A549 (cell line): ENCODE measurements at regions of chr2 and their contacts with region 1.

Region 1: GRCh38 chr2:101361121-101361870 is 26.0 kb downstream of the CREG2 start:
- DNase-seq: no peak
- ATAC-seq: no peak
- H3K4me3 ChIP-seq: no peak overlapping the region
- H3K27ac ChIP-seq: peak overlapping the region; percentile 24 to 27; a peak in 4 of 6 replicates
- H3K4me1 ChIP-seq: peaks cover 36% of the 10 kb centered on the region
- CTCF ChIP-seq: no peak
- EP300 ChIP-seq: no peak
- POLR2A ChIP-seq: no peak
- RAD21 ChIP-seq: no peak

Region 2: DNA sequence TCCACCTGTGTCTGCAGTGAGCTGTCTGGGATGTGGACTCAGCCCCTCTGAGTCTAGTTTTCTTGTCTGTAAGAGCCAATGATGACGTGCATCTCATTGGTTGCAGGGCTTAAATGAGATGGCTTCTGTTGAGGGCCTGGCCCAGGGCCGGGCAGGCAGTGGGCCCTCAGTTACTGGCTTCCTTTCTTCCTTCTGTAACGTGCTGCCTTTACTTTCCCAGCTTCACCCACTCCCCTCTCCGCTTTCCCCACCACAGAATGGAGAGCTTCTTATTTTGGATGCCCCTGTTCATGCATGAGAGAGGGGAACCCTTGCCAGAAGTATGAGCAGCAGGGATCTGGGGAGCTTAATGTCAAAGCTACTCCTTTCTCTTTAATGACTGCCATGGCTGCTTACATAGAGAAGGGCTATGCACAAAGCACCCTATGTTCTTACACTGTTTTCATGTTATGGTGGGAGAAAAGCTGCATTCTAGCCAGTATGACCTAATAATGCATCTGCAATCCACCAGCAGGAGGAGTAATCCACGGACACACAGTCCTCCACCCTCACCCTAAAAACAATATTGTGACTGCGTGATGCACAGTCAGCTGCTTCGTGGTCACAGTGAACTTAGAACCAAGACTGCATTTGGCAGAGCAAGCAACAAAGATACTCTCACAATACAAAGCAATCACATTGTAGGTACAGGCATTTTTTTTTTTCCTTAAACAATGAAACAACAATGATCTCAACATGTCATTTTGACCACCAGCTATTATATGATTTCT is 11.2 kb before region 1 on chr2:
- CTCF ChIA-PET with region 1: interaction called, 15 read pairs
- POLR2A ChIA-PET with region 1: interaction called, 3 read pairs
- DNase-seq: peak in 1 of 2 experiments; percentile 24
- ATAC-seq: peak; percentile 79 to 85; a peak in 5 of 6 replicates
- H3K4me3 ChIP-seq: no peak overlapping the region
- H3K27ac ChIP-seq: no peak overlapping the region
- H3K4me1 ChIP-seq: no peaks in the 10 kb centered on the region
- CTCF ChIP-seq: peak; percentile 31; the same call in 2 of the 3 replicates
- EP300 ChIP-seq: no peak
- POLR2A ChIP-seq: no peak
- RAD21 ChIP-seq: peak in 1 of 2 experiments; percentile 37; a peak in 3 of 5 replicates